CD8-positive, alpha-beta T cell (primary cell): ENCODE measurements at regions of chr12 and their contacts with region 1.

Region 1: DNA sequence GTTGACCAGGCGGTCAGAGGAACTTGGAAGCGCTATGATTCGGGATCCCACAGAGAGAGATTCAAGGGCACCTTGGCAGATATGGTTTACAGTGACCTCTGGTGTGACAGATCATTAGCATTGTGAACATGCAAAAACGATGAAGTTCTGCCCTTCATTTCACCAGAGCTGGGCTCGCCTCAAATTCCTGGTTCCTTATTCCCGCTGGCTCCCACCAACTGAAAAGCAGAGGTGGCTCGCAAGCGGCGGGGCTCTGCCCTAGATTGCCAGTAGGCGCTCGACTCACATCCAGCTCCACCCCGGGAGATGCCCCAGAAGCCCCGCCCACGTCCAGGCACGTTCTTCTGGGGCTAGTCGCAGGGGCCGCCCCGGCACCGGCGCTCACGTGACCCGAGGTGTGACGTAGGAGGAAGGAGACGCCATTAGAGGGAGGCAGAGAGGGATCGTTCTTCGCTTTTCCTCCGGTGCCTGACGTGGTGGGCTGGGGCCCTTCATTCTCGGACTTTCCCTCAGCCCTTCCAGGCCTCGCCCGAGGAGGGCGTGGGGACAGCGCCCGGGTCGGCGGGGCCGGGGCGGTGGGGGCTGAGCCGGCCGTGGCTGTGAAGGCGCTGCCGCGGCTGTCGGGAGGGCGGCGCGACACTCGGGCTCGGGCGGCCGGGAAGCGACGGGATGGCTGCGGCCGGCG is at the start of gene RAB21:
- DNase-seq: peak; percentile 97 to 99 (median 99)
- ATAC-seq: peak; percentile 89
- H3K4me3 ChIP-seq: peak within 1 kb of the TSS; percentile 82 to 93
- H3K4me3 Mint-ChIP-seq: peak within 1 kb of the TSS; percentile 95
- H3K27ac ChIP-seq: peak within 1 kb of the TSS; percentile 89 to 91
- H3K27ac Mint-ChIP-seq: peak within 1 kb of the TSS; percentile 98
- H3K4me1 ChIP-seq: peaks cover 22% of the 10 kb centered on the region
- H3K4me1 Mint-ChIP-seq: peaks cover 47% of the 10 kb centered on the region
- H3K27me3 ChIP-seq: no peaks in the 10 kb centered on the region
- H3K27me3 Mint-ChIP-seq: peaks cover 12% of the 10 kb centered on the region
- CTCF ChIP-seq: peak; percentile 21
- total RNA-seq, gene RAB21: 111 to 127 TPM

Region 2: DNA sequence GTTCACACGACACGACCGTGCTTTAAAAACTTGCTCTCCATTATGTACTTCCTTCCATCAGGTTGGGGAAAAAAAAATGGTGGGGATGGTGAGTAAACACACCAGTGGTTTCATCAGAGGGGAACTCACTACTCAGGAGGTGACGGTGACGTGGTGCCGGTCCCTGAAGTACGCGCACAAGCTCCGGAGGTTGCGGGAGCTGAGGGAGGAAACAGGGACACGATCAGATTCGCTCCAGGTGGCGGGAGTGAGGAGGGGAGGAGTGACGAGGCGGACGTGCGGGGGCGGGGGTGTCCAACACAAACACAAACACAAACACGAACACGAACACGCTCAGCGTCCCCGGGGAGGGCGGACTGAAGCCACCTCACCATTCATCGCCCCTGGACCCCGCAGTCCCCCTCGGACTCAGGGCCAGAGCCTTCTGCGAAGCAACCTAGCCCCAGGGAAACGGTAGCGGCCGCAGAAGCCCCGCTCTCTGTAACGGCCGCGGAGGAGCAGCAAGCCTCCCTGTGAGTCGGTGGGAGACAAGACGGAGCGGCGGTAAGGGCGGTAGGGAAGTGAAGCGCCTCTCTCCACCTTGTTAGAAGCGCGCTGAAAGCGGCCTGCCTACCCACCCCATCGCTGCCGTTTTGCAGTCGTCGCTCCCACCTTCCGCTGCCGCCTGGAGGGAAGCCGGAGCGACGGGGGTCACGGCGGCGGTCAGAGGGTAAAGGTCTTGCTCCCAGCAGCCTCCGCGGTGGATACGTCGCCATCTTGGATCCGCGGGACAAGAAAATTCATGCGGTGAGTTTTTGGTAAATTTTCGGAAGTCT is 1511.7 kb before region 1 on chr12 and contains the start of gene CNOT2:
- CTCF ChIA-PET with region 1: no interaction called
- POLR2A ChIA-PET with region 1: no interaction called
- intact Hi-C with region 1: loop called in 1 of 2 experiments (anchors 5 kb)
- DNase-seq: peak; percentile 79 to 96 (median 91)
- ATAC-seq: peak; percentile 78
- H3K4me3 ChIP-seq: peak within 1 kb of the TSS; percentile 94 to 96
- H3K4me3 Mint-ChIP-seq: peak within 1 kb of the TSS; percentile 100
- H3K27ac ChIP-seq: peak within 1 kb of the TSS; percentile 97 to 99
- H3K27ac Mint-ChIP-seq: peak within 1 kb of the TSS; percentile 100
- H3K4me1 ChIP-seq: peaks cover 57% of the 10 kb centered on the region
- H3K4me1 Mint-ChIP-seq: peaks cover 60% of the 10 kb centered on the region
- H3K27me3 ChIP-seq: no peaks in the 10 kb centered on the region
- H3K27me3 Mint-ChIP-seq: no peaks in the 10 kb centered on the region
- CTCF ChIP-seq: no peak
- total RNA-seq, gene CNOT2: 154 to 158 TPM

Region 3: GRCh38 chr12:71236133-71236660 is 518.4 kb before region 1 on chr12:
- CTCF ChIA-PET with region 1: no interaction called
- POLR2A ChIA-PET with region 1: no interaction called
- intact Hi-C with region 1: no loop called
- DNase-seq: no peak
- ATAC-seq: no peak
- H3K4me3 ChIP-seq: no peak overlapping the region
- H3K4me3 Mint-ChIP-seq: no peak overlapping the region
- H3K27ac ChIP-seq: no peak overlapping the region
- H3K27ac Mint-ChIP-seq: no peak overlapping the region
- H3K4me1 ChIP-seq: no peaks in the 10 kb centered on the region
- H3K4me1 Mint-ChIP-seq: no peaks in the 10 kb centered on the region
- H3K27me3 ChIP-seq: no peaks in the 10 kb centered on the region
- H3K27me3 Mint-ChIP-seq: no peaks in the 10 kb centered on the region
- CTCF ChIP-seq: no peak

Region 4: GRCh38 chr12:71415336-71416231 is 339.0 kb before region 1 on chr12:
- CTCF ChIA-PET with region 1: interaction called, 12 read pairs
- POLR2A ChIA-PET with region 1: interaction called, 3 read pairs
- intact Hi-C with region 1: no loop called
- DNase-seq: peak in 3 of 9 experiments; percentile 9 to 66 (median 54)
- ATAC-seq: no peak
- H3K4me3 ChIP-seq: no peak overlapping the region
- H3K4me3 Mint-ChIP-seq: no peak overlapping the region
- H3K27ac ChIP-seq: no peak overlapping the region
- H3K27ac Mint-ChIP-seq: no peak overlapping the region
- H3K4me1 ChIP-seq: no peaks in the 10 kb centered on the region
- H3K4me1 Mint-ChIP-seq: no peaks in the 10 kb centered on the region
- H3K27me3 ChIP-seq: no peaks in the 10 kb centered on the region
- H3K27me3 Mint-ChIP-seq: peaks cover 3% of the 10 kb centered on the region
- CTCF ChIP-seq: peak; percentile 68

Region 5: GRCh38 chr12:71685914-71686665 is 68.5 kb before region 1 on chr12 and contains the start of gene TMEM19:
- CTCF ChIA-PET with region 1: interaction called, 3 read pairs
- POLR2A ChIA-PET with region 1: interaction called, 19 read pairs
- intact Hi-C with region 1: loop called (anchors 1 to 2 kb)
- DNase-seq: peak; percentile 65 to 92 (median 83)
- ATAC-seq: peak; percentile 88
- H3K4me3 ChIP-seq: peak within 1 kb of the TSS; percentile 66 to 95
- H3K4me3 Mint-ChIP-seq: peak within 1 kb of the TSS; percentile 96
- H3K27ac ChIP-seq: peak within 1 kb of the TSS; percentile 71 to 74
- H3K27ac Mint-ChIP-seq: peak within 1 kb of the TSS; percentile 94
- H3K4me1 ChIP-seq: peaks cover 33% of the 10 kb centered on the region
- H3K4me1 Mint-ChIP-seq: peaks cover 45% of the 10 kb centered on the region
- H3K27me3 ChIP-seq: no peaks in the 10 kb centered on the region
- H3K27me3 Mint-ChIP-seq: no peaks in the 10 kb centered on the region
- CTCF ChIP-seq: no peak
- total RNA-seq, gene TMEM19: 8.8 to 10.0 TPM

Region 6: GRCh38 chr12:71790331-71790730 is 35.7 kb after region 1 on chr12:
- CTCF ChIA-PET with region 1: no interaction called
- POLR2A ChIA-PET with region 1: no interaction called
- intact Hi-C with region 1: loop called in 1 of 2 experiments (anchors 5 kb)
- DNase-seq: no peak
- ATAC-seq: no peak
- H3K4me3 ChIP-seq: no peak overlapping the region
- H3K4me3 Mint-ChIP-seq: no peak overlapping the region
- H3K27ac ChIP-seq: no peak overlapping the region
- H3K27ac Mint-ChIP-seq: no peak overlapping the region
- H3K4me1 ChIP-seq: peaks cover 8% of the 10 kb centered on the region
- H3K4me1 Mint-ChIP-seq: peaks cover 20% of the 10 kb centered on the region
- H3K27me3 ChIP-seq: no peaks in the 10 kb centered on the region
- H3K27me3 Mint-ChIP-seq: no peaks in the 10 kb centered on the region
- CTCF ChIP-seq: no peak